Naive thymus-derived CD8-positive, alpha-beta T cell (primary cell): ENCODE measurements at regions of chr12 and their contacts with region 1.

Region 1: GRCh38 chr12:64633656-64634337 is 23.5 kb downstream of the RASSF3 start:
- DNase-seq: no peak
- ATAC-seq: peak in 1 of 2 donors; percentile 64
- H3K4me3 Mint-ChIP-seq: peak overlapping the region in 9 of 10 donors; percentile 38 to 65 (median 59)
- H3K27ac Mint-ChIP-seq: peak overlapping the region; percentile 12 to 91 (median 82)
- H3K4me1 Mint-ChIP-seq: peaks cover 47 to 95% (median 76%) of the 10 kb centered on the region in 4 donors
- H3K27me3 Mint-ChIP-seq: no peaks in the 10 kb centered on the region

Region 2: GRCh38 chr12:64669270-64669842 is 35.6 kb after region 1 on chr12:
- POLR2A ChIA-PET with region 1: interaction called, 10 read pairs
- DNase-seq: peak in 9 of 10 donors; percentile 33 to 87 (median 60)
- ATAC-seq: peak; percentile 83 to 90
- H3K4me3 Mint-ChIP-seq: peak overlapping the region; percentile 87 to 95 (median 92)
- H3K27ac Mint-ChIP-seq: peak overlapping the region; percentile 85 to 100 (median 98)
- H3K4me1 Mint-ChIP-seq: peaks cover 53 to 97% (median 86%) of the 10 kb centered on the region in 4 donors
- H3K27me3 Mint-ChIP-seq: no peaks in the 10 kb centered on the region

Region 3: DNA sequence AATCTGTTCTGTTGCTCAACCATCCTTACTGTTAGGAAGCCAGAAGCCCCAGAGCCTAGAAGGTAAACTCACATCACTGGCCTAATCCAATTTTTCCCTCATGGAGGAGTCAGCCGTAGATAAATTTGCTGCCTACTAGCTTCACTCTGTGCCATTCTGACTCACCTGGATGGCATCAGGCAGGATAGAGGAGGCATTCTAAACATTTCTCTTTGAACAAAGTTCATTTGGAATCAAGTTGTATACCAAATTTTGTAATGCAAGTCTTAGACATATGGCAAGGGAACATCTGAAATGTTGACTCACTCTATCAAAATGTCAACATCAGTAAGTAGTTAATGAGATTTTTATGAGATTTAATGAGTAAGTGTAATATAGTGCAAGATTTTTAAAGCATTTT is 177.0 kb after region 1 on chr12:
- POLR2A ChIA-PET with region 1: no interaction called
- DNase-seq: no peak
- ATAC-seq: no peak
- H3K4me3 Mint-ChIP-seq: no peak overlapping the region
- H3K27ac Mint-ChIP-seq: no peak overlapping the region
- H3K4me1 Mint-ChIP-seq: peaks cover 0 to 4% (median 1%) of the 10 kb centered on the region in 4 donors
- H3K27me3 Mint-ChIP-seq: peaks cover 16 to 39% (median 33%) of the 10 kb centered on the region in 5 donors

Region 4: DNA sequence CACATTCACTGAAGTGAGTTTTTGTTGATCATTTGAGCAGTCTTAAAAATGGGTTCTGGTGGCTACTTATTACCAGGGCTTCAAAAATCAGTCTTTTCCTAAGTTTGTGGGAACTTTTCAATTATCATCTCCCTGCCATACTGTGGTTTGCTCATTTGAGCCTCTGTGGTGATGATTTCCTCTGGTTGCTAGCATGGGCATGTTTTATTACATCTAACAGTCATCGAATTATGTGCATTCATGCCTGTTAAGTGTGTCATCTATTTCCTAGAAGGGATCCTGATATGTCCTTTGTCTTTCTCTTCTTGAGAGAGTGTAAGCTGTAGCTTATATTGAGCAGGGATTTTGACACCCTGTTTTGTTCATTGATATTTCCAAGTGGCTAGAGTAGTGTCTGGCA is 370.5 kb after region 1 on chr12:
- POLR2A ChIA-PET with region 1: no interaction called
- DNase-seq: no peak
- ATAC-seq: no peak
- H3K4me3 Mint-ChIP-seq: no peak overlapping the region
- H3K27ac Mint-ChIP-seq: no peak overlapping the region
- H3K4me1 Mint-ChIP-seq: peaks cover 0 to 2% (median 0%) of the 10 kb centered on the region in 4 donors
- H3K27me3 Mint-ChIP-seq: peaks cover 13 to 32% (median 16%) of the 10 kb centered on the region in 5 donors